ENCODE measurements at regions of chr18 and their contacts with region 1.

Region 1: DNA sequence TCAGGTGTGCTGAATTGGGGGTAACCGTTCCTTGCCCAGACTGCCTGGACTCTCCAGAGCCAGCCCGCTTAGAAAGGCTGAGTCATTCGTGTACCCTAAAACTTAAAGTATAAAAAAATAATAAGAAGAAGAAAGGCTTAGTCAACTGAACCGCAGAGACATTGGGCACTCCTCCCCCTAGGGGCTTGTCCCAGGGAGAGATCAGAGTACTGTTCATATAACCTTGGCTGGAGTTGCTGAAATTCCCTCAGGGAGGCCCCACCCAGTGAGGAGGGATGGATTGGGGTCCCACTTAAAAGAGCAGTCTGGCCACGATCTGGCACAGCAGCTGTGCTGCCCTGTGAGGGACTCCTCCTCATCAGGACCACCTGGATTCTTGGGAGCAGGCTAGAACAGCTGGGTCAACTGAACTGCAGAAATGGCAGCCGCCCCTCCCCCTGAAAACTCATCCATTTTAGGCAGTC is 37.2 kb downstream of the ANKRD12 start:
- DNase-seq: no peak
- ATAC-seq: peak; percentile 23
- H3K4me3 ChIP-seq: no peak overlapping the region
- H3K4me3 Mint-ChIP-seq: no peak overlapping the region
- H3K27ac ChIP-seq: no peak overlapping the region
- H3K27ac Mint-ChIP-seq: no peak overlapping the region
- H3K4me1 ChIP-seq: peaks cover 19% of the 10 kb centered on the region
- H3K4me1 Mint-ChIP-seq: peaks cover 78% of the 10 kb centered on the region
- H3K27me3 ChIP-seq: no peaks in the 10 kb centered on the region
- H3K27me3 Mint-ChIP-seq: no peaks in the 10 kb centered on the region
- CTCF ChIP-seq: no peak

Region 2: DNA sequence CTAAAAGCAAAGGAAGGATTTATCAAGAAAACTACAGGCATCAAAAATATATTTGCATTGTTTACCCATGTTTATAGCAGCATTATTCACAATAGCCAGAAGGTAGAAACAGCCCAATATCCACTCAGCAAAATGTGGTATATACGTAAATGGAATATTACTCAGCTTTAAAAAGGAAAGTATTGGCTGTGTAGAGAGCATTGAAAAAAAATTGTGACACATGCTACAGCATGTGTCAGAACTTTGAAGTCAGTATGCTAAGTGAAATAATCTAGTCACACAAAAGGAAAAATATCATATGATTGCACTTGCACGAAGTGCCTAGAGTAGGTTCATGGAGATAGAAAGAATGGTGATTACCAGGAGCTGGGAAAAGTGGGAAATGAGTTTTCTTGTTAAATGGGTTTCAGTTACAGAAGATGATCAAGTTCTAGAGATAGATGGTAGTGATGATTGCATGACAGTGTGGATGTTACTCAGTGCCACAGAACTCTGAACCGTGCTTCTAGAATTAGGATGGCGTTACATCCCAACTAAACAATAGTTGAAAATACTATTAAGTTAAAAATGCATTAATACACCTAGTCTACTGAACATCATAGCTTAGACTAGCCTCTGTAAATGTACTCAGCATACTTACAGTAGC is 17.1 kb before region 1 on chr18:
- CTCF ChIA-PET with region 1: interaction called, 3 read pairs
- POLR2A ChIA-PET with region 1: no interaction called
- intact Hi-C with region 1: loop called in 1 of 2 experiments (anchors 2 kb)
- DNase-seq: no peak
- ATAC-seq: peak; percentile 22
- H3K4me3 ChIP-seq: no peak overlapping the region
- H3K4me3 Mint-ChIP-seq: no peak overlapping the region
- H3K27ac ChIP-seq: no peak overlapping the region
- H3K27ac Mint-ChIP-seq: no peak overlapping the region
- H3K4me1 ChIP-seq: peaks cover 59% of the 10 kb centered on the region
- H3K4me1 Mint-ChIP-seq: peaks cover 79% of the 10 kb centered on the region
- H3K27me3 ChIP-seq: no peaks in the 10 kb centered on the region
- H3K27me3 Mint-ChIP-seq: no peaks in the 10 kb centered on the region
- CTCF ChIP-seq: no peak

Region 3: GRCh38 chr18:9259173-9259572 is 85.4 kb after region 1 on chr18:
- CTCF ChIA-PET with region 1: no interaction called
- POLR2A ChIA-PET with region 1: no interaction called
- intact Hi-C with region 1: no loop called
- DNase-seq: no peak
- ATAC-seq: no peak
- H3K4me3 ChIP-seq: no peak overlapping the region
- H3K4me3 Mint-ChIP-seq: no peak overlapping the region
- H3K27ac ChIP-seq: no peak overlapping the region
- H3K27ac Mint-ChIP-seq: no peak overlapping the region
- H3K4me1 ChIP-seq: no peaks in the 10 kb centered on the region
- H3K4me1 Mint-ChIP-seq: peaks cover 10% of the 10 kb centered on the region
- H3K27me3 ChIP-seq: no peaks in the 10 kb centered on the region
- H3K27me3 Mint-ChIP-seq: no peaks in the 10 kb centered on the region
- CTCF ChIP-seq: no peak